ENCODE measurements at regions of chr3 and their contacts with region 1.

Region 1: GRCh38 chr3:57385498-57385897 is 93.0 kb upstream of the ASB14 start:
- DNase-seq: no peak
- ATAC-seq: no peak
- H3K4me3 ChIP-seq: no peak overlapping the region
- H3K27ac ChIP-seq: no peak overlapping the region
- H3K4me1 ChIP-seq: no peaks in the 10 kb centered on the region
- H3K27me3 ChIP-seq: no peaks in the 10 kb centered on the region
- CTCF ChIP-seq: no peak
- EP300 ChIP-seq: no peak
- POLR2A ChIP-seq: no peak
- RAD21 ChIP-seq: no peak

Region 2: GRCh38 chr3:57292159-57292896 is 93.2 kb before region 1 on chr3 and contains the start of gene ASB14:
- CTCF ChIA-PET with region 1: no interaction called
- POLR2A ChIA-PET with region 1: no interaction called
- in situ Hi-C with region 1: no loop called
- intact Hi-C with region 1: no loop called
- DNase-seq: no peak
- ATAC-seq: no peak
- H3K4me3 ChIP-seq: no peak within 1 kb of the TSS
- H3K27ac ChIP-seq: no peak within 1 kb of the TSS
- H3K4me1 ChIP-seq: no peaks in the 10 kb centered on the region
- H3K27me3 ChIP-seq: no peaks in the 10 kb centered on the region
- CTCF ChIP-seq: no peak
- EP300 ChIP-seq: no peak
- POLR2A ChIP-seq: no peak
- RAD21 ChIP-seq: no peak
- polyA plus RNA-seq, gene ASB14: 0.01 to 0.07 TPM

Region 3: DNA sequence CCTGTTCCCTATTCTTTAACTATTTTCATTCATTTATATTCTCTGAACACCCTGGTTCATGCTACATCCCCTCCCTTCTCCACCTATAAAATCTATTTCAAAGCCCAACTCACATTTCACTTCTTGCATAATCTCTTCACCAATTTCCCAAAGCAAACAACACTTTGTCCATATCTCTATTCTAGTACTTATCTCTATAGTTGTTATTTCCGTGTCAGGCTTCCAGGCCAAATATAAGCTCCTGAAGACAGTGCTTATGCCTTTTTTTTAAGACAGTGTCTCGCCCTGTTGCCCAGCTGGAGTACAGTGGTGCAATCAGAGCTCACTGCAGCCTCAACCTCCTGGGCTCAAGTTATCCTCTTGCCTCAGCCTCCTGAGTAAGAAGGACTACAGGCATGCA is 115.0 kb after region 1 on chr3:
- CTCF ChIA-PET with region 1: no interaction called
- POLR2A ChIA-PET with region 1: no interaction called
- in situ Hi-C with region 1: no loop called
- intact Hi-C with region 1: no loop called
- DNase-seq: no peak
- ATAC-seq: no peak
- H3K4me3 ChIP-seq: no peak overlapping the region
- H3K27ac ChIP-seq: no peak overlapping the region
- H3K4me1 ChIP-seq: peaks cover 0 to 4% of the 10 kb centered on the region in 2 experiments; a peak in 1 of 5 replicates
- H3K27me3 ChIP-seq: no peaks in the 10 kb centered on the region; a peak in 1 of 5 replicates
- CTCF ChIP-seq: no peak
- EP300 ChIP-seq: no peak
- POLR2A ChIP-seq: no peak
- RAD21 ChIP-seq: no peak

Region 4: DNA sequence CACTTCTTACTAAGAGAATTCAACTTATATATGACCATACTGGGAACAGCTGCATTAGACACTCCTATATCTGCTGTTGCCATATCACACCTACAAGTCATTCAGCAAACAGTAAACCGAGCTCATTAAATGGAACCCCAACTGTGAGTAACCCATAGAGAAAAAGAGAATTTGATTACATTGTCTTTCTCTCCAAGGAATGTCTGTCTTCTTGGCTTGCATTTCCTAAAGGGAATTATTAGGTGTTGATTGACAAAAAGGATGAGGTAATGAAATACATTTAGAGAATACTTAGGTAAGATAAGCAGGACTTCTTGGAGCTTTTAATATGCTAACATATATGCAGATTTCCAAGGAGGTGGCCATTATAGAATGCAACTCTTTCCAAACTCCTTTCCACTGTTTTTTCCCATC is 447.4 kb after region 1 on chr3:
- CTCF ChIA-PET with region 1: no interaction called
- POLR2A ChIA-PET with region 1: no interaction called
- in situ Hi-C with region 1: loop called (anchors 5 kb)
- intact Hi-C with region 1: no loop called
- DNase-seq: no peak
- ATAC-seq: no peak
- H3K4me3 ChIP-seq: no peak overlapping the region
- H3K27ac ChIP-seq: no peak overlapping the region
- H3K4me1 ChIP-seq: no peaks in the 10 kb centered on the region; a peak in 1 of 5 replicates
- H3K27me3 ChIP-seq: no peaks in the 10 kb centered on the region
- CTCF ChIP-seq: no peak
- EP300 ChIP-seq: no peak
- POLR2A ChIP-seq: no peak
- RAD21 ChIP-seq: no peak